ENCODE measurements at regions of chr18 and their contacts with region 1.

Region 1: DNA sequence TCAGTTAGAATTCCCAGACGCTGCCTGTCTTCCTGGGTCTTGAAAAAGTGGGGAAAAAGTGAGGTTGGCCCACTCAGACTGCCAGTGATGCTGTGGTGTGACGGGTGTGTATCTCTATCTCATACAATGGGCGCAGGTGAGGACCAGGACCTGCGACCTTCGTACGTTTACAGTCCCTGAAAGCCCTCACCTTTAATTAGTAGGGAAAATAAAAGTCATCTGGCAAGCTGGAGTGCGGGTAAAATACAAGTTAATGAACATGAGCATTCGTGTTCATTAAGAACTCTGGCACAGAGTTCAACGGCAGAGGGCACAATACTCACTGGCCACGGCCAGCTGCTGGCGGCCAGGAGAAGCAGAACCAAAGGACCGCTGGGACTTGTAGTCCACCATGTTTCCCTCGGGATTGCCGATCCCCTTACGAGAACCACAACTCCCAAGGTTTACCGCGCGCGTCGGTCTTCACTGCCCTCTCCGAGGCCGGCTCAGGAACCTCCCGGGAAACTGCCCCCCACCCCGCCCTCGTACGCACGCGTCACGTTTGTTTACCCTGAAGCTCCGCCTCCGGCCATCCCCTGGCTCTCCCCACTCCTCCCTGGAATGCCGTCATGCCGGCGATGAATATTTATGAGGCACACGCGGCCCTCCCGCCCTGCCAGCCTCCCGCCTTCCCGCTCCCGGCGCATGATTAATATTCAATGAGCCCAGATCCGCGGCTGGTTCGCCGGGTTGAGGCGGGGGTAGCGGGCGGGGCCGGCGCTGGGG is 488 bp upstream of the PHLPP1 start:
- DNase-seq: peak; percentile 97 to 100 (median 100)

Region 2: GRCh38 chr18:62522504-62523254 is 192.2 kb before region 1 on chr18 and contains the start of gene ZCCHC2:
- intact Hi-C with region 1: loop called (anchors 5 kb)
- DNase-seq: peak; percentile 93 to 100 (median 99)

Region 3: GRCh38 chr18:62584241-62585120 is 130.4 kb before region 1 on chr18:
- intact Hi-C with region 1: loop called (anchors 2 kb)
- DNase-seq: peak; percentile 77 to 95 (median 89)

Region 4: DNA sequence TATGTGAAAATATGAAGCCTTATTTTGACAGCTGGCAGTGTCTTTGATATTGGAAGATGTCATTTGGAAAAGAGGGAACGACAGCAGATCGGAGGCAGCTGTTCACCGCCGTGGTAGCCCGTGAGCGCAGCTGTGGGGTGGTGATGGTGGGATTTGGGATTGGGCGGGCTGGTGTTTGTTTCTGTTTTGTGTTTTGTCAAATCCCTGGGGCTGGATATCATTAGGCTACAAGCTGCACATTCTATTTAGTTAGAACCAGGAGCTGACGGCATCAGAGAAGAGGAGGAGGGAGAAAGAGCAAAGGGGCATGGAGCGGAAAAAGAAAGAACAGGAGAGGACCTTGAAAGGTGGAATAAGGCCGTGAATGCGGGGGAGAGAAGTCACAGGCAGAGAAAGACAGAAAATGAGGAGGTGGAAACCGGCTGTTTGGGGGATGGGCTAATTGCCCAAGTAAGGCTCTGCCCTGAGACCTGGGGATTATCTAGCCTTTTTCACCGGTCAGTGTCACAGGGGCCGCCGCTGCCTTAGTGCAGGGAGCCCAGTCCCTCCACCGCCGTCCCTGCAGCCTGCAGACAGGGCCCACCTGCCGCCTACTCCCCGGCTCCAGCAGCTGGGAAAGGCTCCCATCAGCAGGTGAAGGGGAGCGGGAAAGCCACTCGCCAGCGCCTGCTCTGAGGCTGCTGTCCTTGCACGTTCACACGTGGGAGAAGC is 104.0 kb before region 1 on chr18:
- intact Hi-C with region 1: loop called (anchors 10 kb)
- DNase-seq: peak in 36 of 42 donors; percentile 21 to 68 (median 46)

Region 5: DNA sequence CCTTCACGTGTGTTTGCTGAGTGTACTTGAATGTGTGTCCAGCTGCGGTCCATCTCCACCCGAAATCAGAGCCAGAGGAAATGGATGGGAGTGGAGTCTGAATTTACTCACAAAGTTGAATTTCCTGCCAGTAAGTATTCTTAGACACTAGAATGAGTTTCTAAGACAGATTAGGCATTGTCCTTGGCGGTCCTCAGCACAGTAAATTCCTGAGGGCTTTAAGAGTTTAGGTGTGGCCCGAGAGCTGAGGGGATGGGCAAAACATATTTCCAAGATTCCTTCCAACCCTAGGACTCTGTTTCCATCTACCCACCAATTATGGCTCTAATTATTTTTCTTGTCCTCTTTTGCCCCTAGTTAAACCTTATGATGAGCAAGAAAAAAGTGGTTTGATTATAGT is 89.8 kb before region 1 on chr18:
- intact Hi-C with region 1: no loop called
- DNase-seq: no peak

Region 6: DNA sequence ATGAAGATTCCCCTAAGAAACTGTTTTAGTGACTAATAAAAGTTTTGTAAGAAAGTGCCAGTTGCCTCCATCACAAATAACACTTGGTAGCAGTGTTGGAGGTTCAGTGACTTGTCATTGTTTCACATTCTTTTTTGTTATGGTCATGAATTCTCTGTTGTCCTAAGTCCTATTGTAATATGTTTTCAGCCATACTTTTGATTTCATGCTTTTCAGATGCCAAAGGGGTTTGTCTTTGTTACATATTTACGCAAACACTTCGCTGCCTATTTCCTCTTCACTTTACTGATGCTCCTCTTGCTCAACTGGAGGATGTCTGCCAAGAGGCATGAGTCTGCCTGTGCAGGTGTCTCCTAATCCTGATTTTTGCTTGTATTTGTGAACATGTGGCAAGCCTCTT is 67.0 kb after region 1 on chr18:
- intact Hi-C with region 1: no loop called
- DNase-seq: no peak

Region 7: GRCh38 chr18:62982600-62983251 is 267.9 kb after region 1 on chr18:
- intact Hi-C with region 1: loop called (anchors 2 kb)
- DNase-seq: peak; percentile 49 to 92 (median 78)

Measured in head of caudate nucleus (tissue), 42 donors.